CD8-positive, alpha-beta T cell (primary cell): ENCODE measurements at regions of chr13 and their contacts with region 1.

Region 1: DNA sequence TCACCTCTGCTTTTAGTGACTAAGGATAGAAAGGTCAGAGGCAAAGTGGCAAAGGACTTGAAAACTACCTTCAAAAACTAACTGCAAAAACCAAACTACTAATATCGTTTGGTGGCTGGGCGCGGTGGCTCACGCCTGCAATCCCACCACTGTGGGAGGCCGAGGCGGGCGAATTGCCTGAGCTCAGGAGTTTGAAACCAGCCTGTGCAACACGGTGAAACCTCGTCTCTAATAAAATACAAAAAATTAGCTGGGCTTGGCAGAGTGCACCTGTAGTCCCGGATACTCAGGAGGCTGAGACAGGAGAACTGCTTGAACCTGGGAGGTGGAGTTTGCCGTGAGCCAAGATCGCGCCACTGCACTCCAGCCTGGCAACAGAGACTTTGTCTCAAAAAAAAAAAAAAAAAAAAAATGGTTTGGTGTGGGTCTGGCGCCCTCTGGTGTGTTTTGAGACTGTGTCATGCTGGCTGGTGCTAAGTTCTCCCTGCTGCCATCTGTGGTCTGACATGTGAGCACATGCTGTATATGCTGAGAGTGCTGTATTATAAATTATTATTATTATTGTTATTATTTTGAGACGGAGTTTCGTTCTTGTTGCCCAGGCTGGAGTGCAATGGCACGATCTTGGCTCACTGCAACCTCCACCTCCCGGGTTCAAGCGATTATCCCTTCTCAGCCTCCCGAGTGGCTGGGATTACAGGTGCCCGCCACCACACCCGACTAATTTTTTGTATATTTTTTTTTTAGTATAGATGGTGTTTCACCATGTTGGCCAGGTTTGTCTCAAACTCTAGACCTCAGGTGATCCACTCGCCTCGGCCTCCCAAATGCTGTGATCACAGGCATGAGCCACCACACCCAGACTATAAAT is 36.0 kb upstream of the RNF17 start:
- DNase-seq: peak; percentile 50 to 91 (median 73)
- ATAC-seq: peak; percentile 99
- H3K4me3 ChIP-seq: no peak overlapping the region
- H3K4me3 Mint-ChIP-seq: no peak overlapping the region
- H3K27ac ChIP-seq: no peak overlapping the region
- H3K27ac Mint-ChIP-seq: no peak overlapping the region
- H3K4me1 ChIP-seq: peaks cover 4% of the 10 kb centered on the region
- H3K4me1 Mint-ChIP-seq: peaks cover 3% of the 10 kb centered on the region
- H3K27me3 ChIP-seq: no peaks in the 10 kb centered on the region
- H3K27me3 Mint-ChIP-seq: peaks cover 4% of the 10 kb centered on the region
- CTCF ChIP-seq: peak; percentile 96

Region 2: DNA sequence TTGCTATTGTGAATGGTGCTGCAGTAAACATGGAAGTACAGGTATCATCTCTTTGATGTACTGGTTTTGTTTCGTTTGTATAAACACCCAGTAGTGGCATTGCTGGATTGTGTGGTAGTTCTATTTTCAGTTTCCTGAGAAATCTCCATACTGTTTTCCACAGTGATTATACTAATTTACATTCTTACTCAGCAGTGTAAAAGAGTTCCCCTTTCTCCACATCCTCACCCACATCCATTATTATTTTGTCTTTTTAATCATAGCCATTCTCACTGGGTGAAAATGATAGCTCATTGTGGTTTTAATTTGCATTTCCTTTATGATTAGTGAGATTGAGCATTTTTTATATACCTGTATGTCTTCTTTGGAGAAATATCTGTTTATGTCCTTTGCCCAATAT is 153.1 kb before region 1 on chr13:
- CTCF ChIA-PET with region 1: interaction called, 11 read pairs
- POLR2A ChIA-PET with region 1: no interaction called
- intact Hi-C with region 1: loop called in 1 of 2 experiments (anchors 1 kb)
- DNase-seq: no peak
- ATAC-seq: no peak
- H3K4me3 ChIP-seq: no peak overlapping the region
- H3K4me3 Mint-ChIP-seq: no peak overlapping the region
- H3K27ac ChIP-seq: no peak overlapping the region
- H3K27ac Mint-ChIP-seq: no peak overlapping the region
- H3K4me1 ChIP-seq: no peaks in the 10 kb centered on the region
- H3K4me1 Mint-ChIP-seq: no peaks in the 10 kb centered on the region
- H3K27me3 ChIP-seq: no peaks in the 10 kb centered on the region
- H3K27me3 Mint-ChIP-seq: peaks cover 8% of the 10 kb centered on the region
- CTCF ChIP-seq: no peak

Region 3: DNA sequence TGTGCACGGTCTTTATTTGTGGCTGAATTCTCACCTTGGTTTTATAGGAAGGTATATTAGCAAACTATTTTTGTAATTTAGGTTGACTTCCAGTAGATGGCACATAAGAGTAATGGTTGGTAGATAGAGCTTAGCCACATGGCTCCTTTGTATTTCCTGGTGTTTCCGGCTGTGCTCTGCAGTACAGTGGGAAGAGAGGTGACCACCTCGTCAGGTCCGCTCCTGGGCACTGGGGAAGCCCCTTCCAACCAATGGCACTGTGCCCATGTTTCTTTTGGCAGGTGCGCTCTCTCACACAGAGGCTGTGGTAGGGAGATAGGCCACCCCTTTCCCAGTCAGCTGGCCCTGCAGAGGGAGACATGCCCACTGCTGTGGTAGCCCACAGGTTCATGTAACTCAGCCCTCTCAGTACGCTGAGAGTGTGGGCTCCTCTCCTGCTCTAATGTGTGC is 122.0 kb before region 1 on chr13:
- CTCF ChIA-PET with region 1: interaction called, 56 read pairs
- POLR2A ChIA-PET with region 1: no interaction called
- intact Hi-C with region 1: loop called (anchors 1 kb)
- DNase-seq: peak in 3 of 9 experiments; percentile 13 to 71 (median 54)
- ATAC-seq: peak; percentile 77
- H3K4me3 ChIP-seq: no peak overlapping the region
- H3K4me3 Mint-ChIP-seq: no peak overlapping the region
- H3K27ac ChIP-seq: no peak overlapping the region
- H3K27ac Mint-ChIP-seq: no peak overlapping the region
- H3K4me1 ChIP-seq: peaks cover 5% of the 10 kb centered on the region
- H3K4me1 Mint-ChIP-seq: peaks cover 6% of the 10 kb centered on the region
- H3K27me3 ChIP-seq: no peaks in the 10 kb centered on the region
- H3K27me3 Mint-ChIP-seq: no peaks in the 10 kb centered on the region
- CTCF ChIP-seq: peak; percentile 42

Region 4: GRCh38 chr13:24683838-24684599 is 43.9 kb before region 1 on chr13:
- CTCF ChIA-PET with region 1: interaction called, 11 read pairs
- POLR2A ChIA-PET with region 1: no interaction called
- intact Hi-C with region 1: loop called (anchors 1 to 2 kb)
- DNase-seq: peak in 8 of 9 experiments; percentile 52 to 79 (median 60)
- ATAC-seq: peak; percentile 85
- H3K4me3 ChIP-seq: no peak overlapping the region
- H3K4me3 Mint-ChIP-seq: peak overlapping the region; percentile 51
- H3K27ac ChIP-seq: no peak overlapping the region
- H3K27ac Mint-ChIP-seq: peak overlapping the region; percentile 0
- H3K4me1 ChIP-seq: peaks cover 27% of the 10 kb centered on the region
- H3K4me1 Mint-ChIP-seq: peaks cover 31% of the 10 kb centered on the region
- H3K27me3 ChIP-seq: peaks cover 10 to 17% of the 10 kb centered on the region in 2 experiments
- H3K27me3 Mint-ChIP-seq: peaks cover 30% of the 10 kb centered on the region
- CTCF ChIP-seq: peak; percentile 69

Region 5: DNA sequence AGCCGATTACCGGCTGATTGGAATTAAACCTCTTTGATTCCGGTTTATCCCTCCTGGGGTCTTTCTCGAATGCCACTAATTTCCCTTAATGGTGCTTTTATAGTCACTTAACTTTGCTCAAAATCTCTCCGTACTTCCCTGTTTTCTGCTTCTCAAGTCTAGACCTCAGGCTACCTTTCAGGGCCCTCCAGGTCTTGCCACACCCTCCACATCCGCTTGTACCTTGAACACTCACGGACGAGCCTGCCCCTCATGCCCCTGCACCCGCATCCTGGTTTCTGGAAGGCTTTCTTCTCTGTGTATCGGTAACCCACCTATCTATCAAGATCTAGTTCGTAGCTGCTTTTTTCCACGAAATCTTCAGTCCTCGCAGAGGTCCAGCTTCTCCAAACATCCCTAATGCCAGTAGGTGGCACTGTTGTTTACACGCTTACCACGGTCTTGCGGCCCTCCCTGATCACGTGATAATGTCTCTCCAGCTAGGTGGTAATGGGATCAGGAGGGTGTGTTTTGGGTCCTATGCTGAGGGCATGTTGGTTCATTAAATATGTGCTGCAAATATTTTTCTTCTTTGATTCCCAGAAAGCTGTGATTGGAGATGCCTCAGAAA is 34.0 kb before region 1 on chr13:
- CTCF ChIA-PET with region 1: interaction called, 40 read pairs
- POLR2A ChIA-PET with region 1: no interaction called
- intact Hi-C with region 1: loop called (anchors 1 kb)
- DNase-seq: peak in 4 of 9 experiments; percentile 23 to 75 (median 46)
- ATAC-seq: peak; percentile 49
- H3K4me3 ChIP-seq: no peak overlapping the region
- H3K4me3 Mint-ChIP-seq: no peak overlapping the region
- H3K27ac ChIP-seq: no peak overlapping the region
- H3K27ac Mint-ChIP-seq: no peak overlapping the region
- H3K4me1 ChIP-seq: peaks cover 6% of the 10 kb centered on the region
- H3K4me1 Mint-ChIP-seq: peaks cover 6% of the 10 kb centered on the region
- H3K27me3 ChIP-seq: no peaks in the 10 kb centered on the region
- H3K27me3 Mint-ChIP-seq: peaks cover 29% of the 10 kb centered on the region
- CTCF ChIP-seq: peak; percentile 54

Region 6: GRCh38 chr13:24700539-24700938 is 27.4 kb before region 1 on chr13:
- CTCF ChIA-PET with region 1: interaction called, 14 read pairs
- POLR2A ChIA-PET with region 1: no interaction called
- intact Hi-C with region 1: no loop called
- DNase-seq: no peak
- ATAC-seq: no peak
- H3K4me3 ChIP-seq: no peak overlapping the region
- H3K4me3 Mint-ChIP-seq: no peak overlapping the region
- H3K27ac ChIP-seq: no peak overlapping the region
- H3K27ac Mint-ChIP-seq: no peak overlapping the region
- H3K4me1 ChIP-seq: no peaks in the 10 kb centered on the region
- H3K4me1 Mint-ChIP-seq: no peaks in the 10 kb centered on the region
- H3K27me3 ChIP-seq: no peaks in the 10 kb centered on the region
- H3K27me3 Mint-ChIP-seq: peaks cover 10% of the 10 kb centered on the region
- CTCF ChIP-seq: no peak

Region 7: GRCh38 chr13:24709186-24709913 is 18.6 kb before region 1 on chr13:
- CTCF ChIA-PET with region 1: interaction called, 38 read pairs
- POLR2A ChIA-PET with region 1: no interaction called
- intact Hi-C with region 1: no loop called
- DNase-seq: peak; percentile 31 to 89 (median 65)
- ATAC-seq: peak; percentile 96
- H3K4me3 ChIP-seq: peak overlapping the region; percentile 10 to 20
- H3K4me3 Mint-ChIP-seq: peak overlapping the region; percentile 55
- H3K27ac ChIP-seq: peak overlapping the region; percentile 5 to 51
- H3K27ac Mint-ChIP-seq: peak overlapping the region; percentile 86
- H3K4me1 ChIP-seq: peaks cover 11% of the 10 kb centered on the region
- H3K4me1 Mint-ChIP-seq: peaks cover 15% of the 10 kb centered on the region
- H3K27me3 ChIP-seq: no peaks in the 10 kb centered on the region
- H3K27me3 Mint-ChIP-seq: peaks cover under 1% of the 10 kb centered on the region
- CTCF ChIP-seq: no peak